CD4-positive, alpha-beta T cell (primary cell): ENCODE measurements at regions of chr15 and their contacts with region 1.

Region 1: DNA sequence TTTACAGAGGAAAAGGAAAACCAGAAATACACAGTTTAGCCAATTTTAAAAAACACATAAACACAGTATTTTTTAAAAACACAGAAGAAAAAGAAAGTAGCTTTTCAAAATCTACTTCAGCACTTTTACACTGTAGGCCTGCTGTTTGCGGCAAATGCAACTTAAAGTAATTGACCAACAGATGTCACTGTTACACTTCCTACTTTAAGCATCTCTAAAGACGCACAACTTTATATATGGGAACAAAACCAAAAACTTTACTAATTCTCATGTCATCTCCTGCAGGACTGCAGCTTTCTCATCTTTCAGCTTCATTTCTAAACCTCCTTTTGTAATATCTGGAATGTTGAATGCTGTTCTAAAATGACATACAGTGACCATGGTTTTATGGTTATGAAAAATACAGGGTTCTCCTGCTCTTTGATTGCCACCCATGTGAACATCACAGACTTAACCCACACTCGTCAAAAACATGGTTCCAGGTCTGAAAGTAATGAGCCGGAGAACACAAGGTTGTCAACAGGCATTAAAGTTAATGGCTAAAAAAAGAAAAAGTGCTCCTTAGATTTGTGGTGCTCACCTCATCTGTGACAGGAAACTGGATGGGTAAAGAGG is 107.9 kb downstream of the FMN1 start:
- DNase-seq: peak in 3 of 14 experiments; percentile 41 to 72 (median 69)
- ATAC-seq: peak; percentile 71
- H3K4me3 ChIP-seq: no peak overlapping the region
- H3K4me3 Mint-ChIP-seq: no peak overlapping the region
- H3K27ac ChIP-seq: no peak overlapping the region
- H3K27ac Mint-ChIP-seq: no peak overlapping the region
- H3K4me1 ChIP-seq: no peaks in the 10 kb centered on the region
- H3K4me1 Mint-ChIP-seq: peaks cover 16% of the 10 kb centered on the region
- H3K27me3 ChIP-seq: no peaks in the 10 kb centered on the region
- H3K27me3 Mint-ChIP-seq: no peaks in the 10 kb centered on the region
- CTCF ChIP-seq: peak; percentile 77

Region 2: GRCh38 chr15:32659340-32660155 is 427.1 kb before region 1 on chr15:
- CTCF ChIA-PET with region 1: no interaction called
- POLR2A ChIA-PET with region 1: no interaction called
- intact Hi-C with region 1: loop called in 1 of 2 experiments (anchors 5 kb)
- DNase-seq: no peak
- ATAC-seq: no peak
- H3K4me3 ChIP-seq: no peak overlapping the region
- H3K4me3 Mint-ChIP-seq: no peak overlapping the region
- H3K27ac ChIP-seq: no peak overlapping the region
- H3K27ac Mint-ChIP-seq: no peak overlapping the region
- H3K4me1 ChIP-seq: peaks cover 5% of the 10 kb centered on the region
- H3K4me1 Mint-ChIP-seq: peaks cover 10% of the 10 kb centered on the region
- H3K27me3 ChIP-seq: no peaks in the 10 kb centered on the region
- H3K27me3 Mint-ChIP-seq: no peaks in the 10 kb centered on the region
- CTCF ChIP-seq: no peak

Region 3: GRCh38 chr15:33132722-33133345 is 46.2 kb after region 1 on chr15:
- CTCF ChIA-PET with region 1: no interaction called
- POLR2A ChIA-PET with region 1: no interaction called
- intact Hi-C with region 1: loop called (anchors 1 kb)
- DNase-seq: peak in 3 of 14 experiments; percentile 46 to 57 (median 55)
- ATAC-seq: no peak
- H3K4me3 ChIP-seq: no peak overlapping the region
- H3K4me3 Mint-ChIP-seq: no peak overlapping the region
- H3K27ac ChIP-seq: no peak overlapping the region
- H3K27ac Mint-ChIP-seq: no peak overlapping the region
- H3K4me1 ChIP-seq: no peaks in the 10 kb centered on the region
- H3K4me1 Mint-ChIP-seq: peaks cover 2% of the 10 kb centered on the region
- H3K27me3 ChIP-seq: no peaks in the 10 kb centered on the region
- H3K27me3 Mint-ChIP-seq: no peaks in the 10 kb centered on the region
- CTCF ChIP-seq: peak; percentile 70

Region 4: GRCh38 chr15:33145447-33145846 is 58.8 kb after region 1 on chr15:
- CTCF ChIA-PET with region 1: no interaction called
- POLR2A ChIA-PET with region 1: no interaction called
- intact Hi-C with region 1: no loop called
- DNase-seq: no peak
- ATAC-seq: no peak
- H3K4me3 ChIP-seq: no peak overlapping the region
- H3K4me3 Mint-ChIP-seq: no peak overlapping the region
- H3K27ac ChIP-seq: no peak overlapping the region
- H3K27ac Mint-ChIP-seq: no peak overlapping the region
- H3K4me1 ChIP-seq: peaks cover 6% of the 10 kb centered on the region
- H3K4me1 Mint-ChIP-seq: peaks cover 16% of the 10 kb centered on the region
- H3K27me3 ChIP-seq: no peaks in the 10 kb centered on the region
- H3K27me3 Mint-ChIP-seq: no peaks in the 10 kb centered on the region
- CTCF ChIP-seq: no peak

Region 5: DNA sequence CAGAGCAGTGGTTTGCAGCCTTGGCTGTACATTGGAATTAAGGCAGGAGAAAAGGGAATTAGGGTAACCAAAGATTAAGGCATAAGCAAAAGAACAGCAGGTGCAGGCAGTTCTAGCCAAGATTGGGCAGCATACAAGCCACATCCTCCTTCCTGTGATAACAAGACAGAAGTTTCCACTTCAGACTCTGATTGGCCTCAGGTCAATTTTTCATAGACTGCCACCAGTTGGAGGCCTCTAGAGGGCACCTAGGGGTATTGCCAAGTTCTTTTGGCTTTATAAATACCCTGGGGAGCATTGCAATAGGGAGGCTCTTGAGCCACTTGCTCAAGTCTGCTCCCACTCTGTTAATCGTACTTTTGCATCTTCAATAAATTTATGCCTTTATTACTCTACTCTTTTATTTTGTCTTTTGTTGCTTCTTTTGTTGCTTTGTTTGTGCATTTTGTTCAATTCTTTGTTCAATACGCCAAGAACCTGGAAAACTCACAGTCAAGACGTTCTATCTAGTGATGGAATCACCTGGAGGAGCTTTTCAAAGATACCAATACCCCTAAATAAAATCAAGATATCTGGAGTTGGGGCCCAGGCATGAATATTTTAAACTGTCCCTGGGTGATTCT is 140.1 kb after region 1 on chr15:
- CTCF ChIA-PET with region 1: no interaction called
- POLR2A ChIA-PET with region 1: no interaction called
- intact Hi-C with region 1: loop called (anchors 5 kb)
- DNase-seq: peak; percentile 24 to 86 (median 57)
- ATAC-seq: peak; percentile 99
- H3K4me3 ChIP-seq: no peak overlapping the region
- H3K4me3 Mint-ChIP-seq: peak overlapping the region; percentile 26
- H3K27ac ChIP-seq: peak overlapping the region in 1 of 2 donors; percentile 32
- H3K27ac Mint-ChIP-seq: peak overlapping the region; percentile 77
- H3K4me1 ChIP-seq: peaks cover 13% of the 10 kb centered on the region
- H3K4me1 Mint-ChIP-seq: peaks cover 26% of the 10 kb centered on the region
- H3K27me3 ChIP-seq: no peaks in the 10 kb centered on the region
- H3K27me3 Mint-ChIP-seq: no peaks in the 10 kb centered on the region
- CTCF ChIP-seq: peak; percentile 71

Region 6: DNA sequence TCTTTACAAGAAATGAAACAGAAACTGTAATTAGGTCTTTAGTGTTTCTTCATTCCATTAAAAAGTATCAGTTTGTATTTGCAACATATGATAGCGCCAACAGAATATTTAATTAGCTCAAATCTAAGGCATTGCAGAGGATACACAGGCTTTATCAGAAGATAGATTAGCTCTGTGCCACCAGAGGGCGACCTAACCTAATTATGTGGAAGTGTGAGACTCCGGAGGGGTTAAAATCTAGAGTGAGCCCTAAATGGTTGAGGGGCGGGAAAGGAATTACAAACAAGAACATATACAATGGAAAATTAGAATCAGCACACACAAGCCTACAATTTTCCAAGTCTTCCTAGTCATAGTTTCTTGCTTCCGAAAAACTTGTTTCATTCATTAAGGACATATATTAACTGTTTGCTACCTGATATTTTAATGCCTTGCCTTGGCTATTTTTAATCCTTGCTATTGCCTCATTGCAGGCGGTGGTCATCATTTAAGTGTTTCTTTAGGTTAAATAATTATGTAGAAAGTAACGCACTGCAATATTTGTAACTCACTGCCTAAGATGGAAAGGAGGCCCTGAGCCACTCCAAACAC is 206.2 kb after region 1 on chr15:
- CTCF ChIA-PET with region 1: no interaction called
- POLR2A ChIA-PET with region 1: no interaction called
- intact Hi-C with region 1: loop called in 1 of 2 experiments (anchors 5 kb)
- DNase-seq: peak in 12 of 14 experiments; percentile 1 to 61 (median 23)
- ATAC-seq: no peak
- H3K4me3 ChIP-seq: no peak overlapping the region
- H3K4me3 Mint-ChIP-seq: no peak overlapping the region
- H3K27ac ChIP-seq: no peak overlapping the region
- H3K27ac Mint-ChIP-seq: no peak overlapping the region
- H3K4me1 ChIP-seq: no peaks in the 10 kb centered on the region
- H3K4me1 Mint-ChIP-seq: no peaks in the 10 kb centered on the region
- H3K27me3 ChIP-seq: no peaks in the 10 kb centered on the region
- H3K27me3 Mint-ChIP-seq: no peaks in the 10 kb centered on the region
- CTCF ChIP-seq: peak; percentile 64